Activated CD8-positive, alpha-beta T cell treated with anti-CD3 and anti-CD28 coated beads for 36 hours (primary cell): ENCODE measurements at regions of chr11 and their contacts with region 1.

Region 1: GRCh38 chr11:9137293-9138132 is 46.1 kb upstream of the SCUBE2 start:
- DNase-seq: peak; percentile 81
- ATAC-seq: peak; percentile 99
- H3K4me3 Mint-ChIP-seq: no peak overlapping the region
- H3K27ac Mint-ChIP-seq: no peak overlapping the region
- H3K4me1 Mint-ChIP-seq: peaks cover 8% of the 10 kb centered on the region
- H3K27me3 Mint-ChIP-seq: no peaks in the 10 kb centered on the region
- CTCF ChIP-seq: peak; percentile 91

Region 2: DNA sequence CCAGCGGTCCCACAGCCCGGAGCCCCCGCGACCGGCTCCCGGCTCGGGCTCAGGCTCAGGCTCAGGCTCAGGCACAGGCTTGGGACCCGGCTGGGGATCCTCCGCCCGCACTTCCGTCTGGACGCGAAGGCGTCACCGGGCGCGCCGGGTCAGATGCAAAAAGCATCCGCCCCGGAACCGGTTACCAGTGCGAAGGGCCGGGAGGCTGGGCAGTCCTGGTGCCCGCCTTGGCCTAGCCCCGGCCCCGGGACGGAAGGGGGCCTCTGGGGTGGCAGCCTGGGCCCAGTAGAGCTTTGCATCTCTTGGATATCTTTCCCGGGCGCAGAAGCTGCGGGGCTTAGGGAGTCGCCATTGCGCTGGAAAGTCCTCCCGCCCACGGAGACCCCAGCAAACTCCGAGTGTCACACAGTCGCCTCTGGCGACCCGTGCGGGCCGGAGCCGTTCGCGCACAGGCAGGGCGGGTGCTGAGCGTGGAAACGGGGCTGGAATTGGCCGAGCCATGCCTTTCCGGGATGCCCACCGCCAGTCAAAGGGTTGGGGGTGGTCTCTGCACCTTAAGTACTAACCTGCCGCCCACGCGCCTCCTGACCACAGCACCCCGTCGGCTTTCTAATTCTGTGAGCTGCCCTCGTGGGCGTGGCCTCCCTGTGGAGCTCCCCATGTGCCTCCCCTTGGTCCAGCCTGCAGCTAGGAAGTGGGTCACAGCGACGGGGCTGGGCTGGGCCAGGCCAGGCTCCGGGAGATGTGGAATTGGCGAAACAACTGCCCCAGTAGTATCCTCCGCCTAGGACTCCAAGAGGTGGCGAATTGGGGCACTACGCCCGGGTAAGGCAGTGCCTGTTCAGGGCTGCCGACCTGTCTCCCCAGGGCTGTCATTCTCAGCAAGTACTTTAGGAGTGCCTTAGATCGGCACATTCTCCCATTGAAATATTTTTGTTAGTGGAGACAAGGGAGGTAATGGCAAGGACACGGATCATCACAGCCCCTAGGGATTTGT is 172.9 kb before region 1 on chr11 and contains the start of gene TMEM9B:
- CTCF ChIA-PET with region 1: interaction called, 23 read pairs
- POLR2A ChIA-PET with region 1: interaction called, 3 read pairs
- intact Hi-C with region 1: no loop called
- DNase-seq: peak; percentile 95
- ATAC-seq: peak; percentile 85
- H3K4me3 Mint-ChIP-seq: peak within 1 kb of the TSS; percentile 94
- H3K27ac Mint-ChIP-seq: peak within 1 kb of the TSS; percentile 91
- H3K4me1 Mint-ChIP-seq: peaks cover 25% of the 10 kb centered on the region
- H3K27me3 Mint-ChIP-seq: no peaks in the 10 kb centered on the region
- CTCF ChIP-seq: no peak
- total RNA-seq, gene TMEM9B: 14.6 to 16.3 TPM

Region 3: DNA sequence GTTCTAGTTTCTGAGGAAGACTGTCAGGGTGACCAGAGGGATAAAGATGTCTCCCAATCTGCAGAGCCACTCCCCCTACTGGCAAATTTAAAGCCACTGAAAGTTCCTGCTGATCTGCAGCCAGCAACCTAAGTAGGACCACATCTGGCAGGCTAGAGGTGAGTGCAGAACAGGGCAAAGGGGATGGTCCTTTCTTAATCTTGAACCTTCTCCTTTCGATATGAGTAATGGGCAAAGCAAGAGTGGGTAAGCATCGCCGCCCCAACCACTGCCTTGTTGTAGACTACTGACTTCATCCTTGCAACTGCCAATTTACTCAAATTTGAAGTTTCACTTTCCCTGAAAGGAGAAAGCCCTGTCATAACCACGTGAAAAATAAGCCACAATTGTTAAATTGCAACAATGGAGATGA is 76.8 kb before region 1 on chr11:
- CTCF ChIA-PET with region 1: interaction called, 10 read pairs
- POLR2A ChIA-PET with region 1: interaction called, 3 read pairs
- intact Hi-C with region 1: no loop called
- DNase-seq: peak; percentile 87
- ATAC-seq: peak; percentile 99
- H3K4me3 Mint-ChIP-seq: no peak overlapping the region
- H3K27ac Mint-ChIP-seq: peak overlapping the region; percentile 4
- H3K4me1 Mint-ChIP-seq: peaks cover 11% of the 10 kb centered on the region
- H3K27me3 Mint-ChIP-seq: peaks cover 8% of the 10 kb centered on the region
- CTCF ChIP-seq: no peak

Region 4: GRCh38 chr11:9120664-9121485 is 16.6 kb before region 1 on chr11:
- CTCF ChIA-PET with region 1: interaction called, 14 read pairs
- POLR2A ChIA-PET with region 1: no interaction called
- intact Hi-C with region 1: no loop called
- DNase-seq: no peak
- ATAC-seq: no peak
- H3K4me3 Mint-ChIP-seq: no peak overlapping the region
- H3K27ac Mint-ChIP-seq: no peak overlapping the region
- H3K4me1 Mint-ChIP-seq: peaks cover 5% of the 10 kb centered on the region
- H3K27me3 Mint-ChIP-seq: no peaks in the 10 kb centered on the region
- CTCF ChIP-seq: no peak

Region 5: GRCh38 chr11:9158898-9159391 is 21.4 kb after region 1 on chr11:
- CTCF ChIA-PET with region 1: interaction called, 13 read pairs
- POLR2A ChIA-PET with region 1: no interaction called
- intact Hi-C with region 1: no loop called
- DNase-seq: no peak
- ATAC-seq: peak; percentile 54
- H3K4me3 Mint-ChIP-seq: no peak overlapping the region
- H3K27ac Mint-ChIP-seq: peak overlapping the region; percentile 83
- H3K4me1 Mint-ChIP-seq: peaks cover 25% of the 10 kb centered on the region
- H3K27me3 Mint-ChIP-seq: no peaks in the 10 kb centered on the region
- CTCF ChIP-seq: no peak

Region 6: GRCh38 chr11:9550191-9550628 is 412.7 kb after region 1 on chr11:
- CTCF ChIA-PET with region 1: no interaction called
- POLR2A ChIA-PET with region 1: no interaction called
- intact Hi-C with region 1: no loop called
- DNase-seq: no peak
- ATAC-seq: no peak
- H3K4me3 Mint-ChIP-seq: no peak overlapping the region
- H3K27ac Mint-ChIP-seq: no peak overlapping the region
- H3K4me1 Mint-ChIP-seq: no peaks in the 10 kb centered on the region
- H3K27me3 Mint-ChIP-seq: no peaks in the 10 kb centered on the region
- CTCF ChIP-seq: no peak